Activated CD8-positive, alpha-beta T cell treated with anti-CD3 and anti-CD28 coated beads, Interleukin-2, amount 10 ng/mL, durations not matched to agents 7 days and 5 days (primary cell): ENCODE measurements at regions of chr2 and their contacts with region 1.

Region 1: GRCh38 chr2:201860636-201861066 is 54.3 kb downstream of the CDK15 start:
- DNase-seq: peak; percentile 60
- ATAC-seq: peak; percentile 77
- H3K4me3 Mint-ChIP-seq: no peak overlapping the region
- H3K27ac Mint-ChIP-seq: no peak overlapping the region
- H3K4me1 Mint-ChIP-seq: peaks cover 11% of the 10 kb centered on the region
- H3K27me3 Mint-ChIP-seq: peaks cover 35% of the 10 kb centered on the region

Region 2: DNA sequence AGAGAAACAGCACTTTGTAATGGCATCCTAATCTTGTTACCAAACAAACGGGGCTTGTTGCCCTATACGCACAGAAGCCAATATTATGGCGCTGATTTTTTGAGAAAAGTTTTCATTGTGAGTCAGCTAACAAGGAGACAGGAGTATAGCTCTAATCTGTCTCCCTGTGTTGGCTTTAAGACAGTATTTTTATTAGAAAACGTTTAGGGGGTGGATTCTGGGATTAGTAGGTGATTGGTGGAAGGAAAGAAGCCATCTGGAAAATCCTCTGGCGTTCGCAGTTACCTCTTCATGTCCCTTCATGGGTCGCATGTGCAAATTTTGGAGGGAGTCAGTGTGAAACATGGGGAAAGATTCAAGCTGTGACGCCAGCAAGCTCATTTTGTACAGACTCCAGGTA is 216.7 kb before region 1 on chr2:
- CTCF ChIA-PET with region 1: no interaction called
- POLR2A ChIA-PET with region 1: no interaction called
- DNase-seq: no peak
- ATAC-seq: no peak
- H3K4me3 Mint-ChIP-seq: peak overlapping the region; percentile 86
- H3K27ac Mint-ChIP-seq: no peak overlapping the region
- H3K4me1 Mint-ChIP-seq: peaks cover 23% of the 10 kb centered on the region
- H3K27me3 Mint-ChIP-seq: peaks cover 4% of the 10 kb centered on the region

Region 3: DNA sequence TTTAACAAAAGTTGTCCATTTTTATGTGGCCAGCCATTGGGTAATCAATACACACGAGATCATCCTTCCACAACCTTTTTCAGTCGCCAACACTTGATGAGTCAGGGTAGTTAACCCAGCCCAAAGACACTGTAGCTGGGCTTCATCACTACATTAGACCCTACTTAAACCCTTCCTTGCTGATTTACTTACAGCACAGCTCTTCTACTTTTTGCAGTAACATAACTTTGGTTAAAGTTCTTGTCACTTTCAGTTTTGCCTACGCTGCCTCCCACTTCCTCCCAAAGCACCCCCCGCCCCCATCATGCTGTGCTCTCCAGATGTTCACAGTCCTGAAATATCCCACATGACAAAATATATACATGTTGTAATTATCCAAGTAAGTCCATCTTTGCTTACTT is 49.3 kb after region 1 on chr2:
- CTCF ChIA-PET with region 1: interaction called, 10 read pairs
- POLR2A ChIA-PET with region 1: no interaction called
- DNase-seq: peak; percentile 50
- ATAC-seq: peak; percentile 44
- H3K4me3 Mint-ChIP-seq: peak overlapping the region; percentile 6
- H3K27ac Mint-ChIP-seq: peak overlapping the region; percentile 74
- H3K4me1 Mint-ChIP-seq: peaks cover 17% of the 10 kb centered on the region
- H3K27me3 Mint-ChIP-seq: peaks cover 16% of the 10 kb centered on the region

Region 4: GRCh38 chr2:202172439-202173211 is 312.0 kb after region 1 on chr2:
- CTCF ChIA-PET with region 1: interaction called, 49 read pairs
- POLR2A ChIA-PET with region 1: no interaction called
- DNase-seq: no peak
- ATAC-seq: no peak
- H3K4me3 Mint-ChIP-seq: no peak overlapping the region
- H3K27ac Mint-ChIP-seq: no peak overlapping the region
- H3K4me1 Mint-ChIP-seq: peaks cover 13% of the 10 kb centered on the region
- H3K27me3 Mint-ChIP-seq: peaks cover 5% of the 10 kb centered on the region

Region 5: GRCh38 chr2:202178342-202178958 is 317.8 kb after region 1 on chr2:
- CTCF ChIA-PET with region 1: interaction called, 49 read pairs
- POLR2A ChIA-PET with region 1: no interaction called
- DNase-seq: peak; percentile 66
- ATAC-seq: peak; percentile 81
- H3K4me3 Mint-ChIP-seq: no peak overlapping the region
- H3K27ac Mint-ChIP-seq: no peak overlapping the region
- H3K4me1 Mint-ChIP-seq: no peaks in the 10 kb centered on the region
- H3K27me3 Mint-ChIP-seq: peaks cover 3% of the 10 kb centered on the region